GM10248 (cell line): ENCODE measurements at regions of chr4 and their contacts with region 1.

Region 1: DNA sequence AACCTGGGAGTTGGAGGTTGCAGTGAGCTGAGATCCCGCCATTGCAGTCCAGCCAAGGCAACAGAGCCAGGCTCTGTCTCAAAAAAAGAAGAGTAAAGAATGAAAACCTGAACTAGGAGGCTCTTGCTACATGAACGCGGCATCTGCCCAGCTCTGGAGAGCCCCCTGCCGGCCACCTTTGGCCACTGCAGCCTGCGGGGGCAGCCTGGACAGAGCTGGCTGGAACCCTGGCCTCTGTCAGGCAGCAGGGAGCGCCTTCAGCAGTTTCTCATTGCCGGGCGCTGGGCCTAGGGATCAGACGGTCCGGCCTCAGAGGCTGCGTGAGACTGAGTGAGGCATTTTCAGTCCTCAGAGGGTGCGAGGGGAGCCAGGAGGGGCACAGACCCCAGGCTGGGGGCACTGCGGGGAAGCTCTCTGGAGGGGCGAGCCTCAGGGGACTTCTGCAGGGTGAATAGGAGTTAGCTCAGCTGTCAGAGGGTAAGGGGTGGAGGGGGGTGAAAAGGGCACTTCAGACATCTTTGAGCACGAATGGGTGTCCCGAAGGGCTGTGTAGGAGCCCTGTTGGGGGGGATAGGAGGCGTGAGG is 17.5 kb downstream of the DOK7 start:
- DNase-seq: peak; percentile 87
- CTCF ChIP-seq: peak; percentile 98

Region 2: GRCh38 chr4:3346146-3346545 is 134.5 kb before region 1 on chr4:
- CTCF ChIA-PET with region 1: interaction called, 48 read pairs
- POLR2A ChIA-PET with region 1: no interaction called
- DNase-seq: peak; percentile 82
- CTCF ChIP-seq: peak; percentile 76

Region 3: GRCh38 chr4:3434891-3435685 is 45.5 kb before region 1 on chr4:
- CTCF ChIA-PET with region 1: interaction called, 10 read pairs
- POLR2A ChIA-PET with region 1: no interaction called
- DNase-seq: no peak
- CTCF ChIP-seq: no peak

Region 4: DNA sequence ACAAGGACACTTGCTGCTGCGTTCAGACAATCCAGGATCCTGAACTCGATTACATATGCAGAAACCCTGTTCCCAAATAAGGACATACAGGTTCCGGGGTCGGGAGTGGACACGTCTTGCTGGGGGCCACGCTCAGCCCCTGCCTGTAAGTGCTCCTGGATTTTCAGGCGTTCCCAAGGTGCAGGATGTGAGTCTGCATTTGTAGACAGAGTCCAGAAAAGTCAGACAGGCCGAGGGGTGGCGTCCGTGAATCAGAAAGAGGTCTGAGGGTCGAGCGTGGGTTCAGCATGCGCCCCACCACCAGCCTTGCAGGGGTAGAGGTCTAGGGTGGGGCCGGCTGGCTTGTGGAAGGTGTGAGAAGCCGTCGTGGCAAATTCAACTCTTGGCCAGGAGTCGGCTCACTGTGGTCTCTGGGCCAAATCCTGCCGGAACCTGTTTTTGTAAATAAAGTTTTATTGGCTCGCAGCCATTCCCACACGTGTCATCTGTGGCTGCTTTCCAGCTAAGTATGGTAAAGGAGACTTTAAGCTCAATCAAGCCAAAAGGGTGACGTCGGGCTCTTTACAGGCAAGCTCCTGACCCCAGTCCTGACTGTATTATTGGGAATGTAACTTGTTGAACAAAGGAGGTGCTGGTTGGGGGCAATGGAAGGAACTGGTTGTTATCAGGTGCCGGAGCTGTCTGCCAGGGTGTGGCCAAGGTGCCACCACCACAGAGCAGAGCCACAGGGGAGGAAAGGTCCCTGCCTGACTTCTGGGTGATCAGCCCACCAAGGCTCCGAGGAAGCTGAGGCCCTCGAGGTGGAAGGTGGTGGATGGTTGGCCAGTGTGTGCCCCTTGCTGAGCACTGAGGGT is 10.1 kb before region 1 on chr4:
- CTCF ChIA-PET with region 1: interaction called, 41 read pairs
- POLR2A ChIA-PET with region 1: no interaction called
- DNase-seq: no peak
- CTCF ChIP-seq: no peak

Region 5: GRCh38 chr4:3514806-3515460 is 34.3 kb after region 1 on chr4:
- CTCF ChIA-PET with region 1: interaction called, 16 read pairs
- POLR2A ChIA-PET with region 1: no interaction called
- DNase-seq: no peak
- CTCF ChIP-seq: no peak

Region 6: GRCh38 chr4:3657902-3658529 is 177.4 kb after region 1 on chr4:
- CTCF ChIA-PET with region 1: no interaction called
- POLR2A ChIA-PET with region 1: no interaction called
- DNase-seq: no peak
- CTCF ChIP-seq: no peak